ENCODE measurements at regions of chr6 and their contacts with region 1.

Region 1: DNA sequence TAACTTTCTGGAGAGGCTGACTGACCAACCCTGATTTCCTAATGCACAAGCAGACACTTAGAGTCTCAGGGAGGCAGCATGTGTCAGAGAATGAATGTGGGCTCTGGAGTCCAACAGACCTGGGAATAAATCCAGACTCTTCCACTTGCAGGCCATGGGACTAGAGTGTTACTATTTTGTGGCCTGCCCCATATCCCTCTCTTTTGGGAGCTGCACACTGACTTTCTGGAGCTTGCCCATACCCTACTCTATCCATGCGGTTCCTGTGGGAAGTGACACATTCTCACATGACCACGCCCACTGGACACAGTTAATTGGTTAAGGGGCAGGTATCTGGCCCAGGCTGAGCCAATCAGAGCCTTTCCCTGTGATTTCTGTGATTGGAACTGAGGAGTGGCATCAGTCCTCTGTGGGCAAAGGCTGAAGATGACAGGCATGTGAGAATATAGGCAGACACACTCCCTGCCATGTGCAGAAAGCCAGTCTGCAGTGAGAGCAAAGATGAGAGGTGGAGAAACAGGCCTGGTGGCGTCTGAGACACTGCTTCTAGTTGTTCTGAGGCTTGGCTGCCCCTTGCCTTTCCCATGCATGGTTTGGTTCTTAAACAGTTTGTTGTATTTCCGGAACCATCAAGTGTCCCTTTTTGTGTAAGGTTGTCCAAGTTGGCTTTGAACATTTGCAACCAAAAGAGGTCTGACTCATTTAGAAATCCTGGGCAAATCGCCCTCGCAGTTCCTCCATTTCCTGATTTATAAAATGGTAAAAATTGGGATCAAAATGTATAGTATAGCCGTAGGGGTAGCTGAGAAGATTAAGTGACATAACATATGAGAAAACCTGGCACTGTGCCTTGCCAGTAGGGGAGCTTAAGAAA is 125.6 kb downstream of the CDC5L start:
- DNase-seq: no peak
- ATAC-seq: peak; percentile 81

Region 2: DNA sequence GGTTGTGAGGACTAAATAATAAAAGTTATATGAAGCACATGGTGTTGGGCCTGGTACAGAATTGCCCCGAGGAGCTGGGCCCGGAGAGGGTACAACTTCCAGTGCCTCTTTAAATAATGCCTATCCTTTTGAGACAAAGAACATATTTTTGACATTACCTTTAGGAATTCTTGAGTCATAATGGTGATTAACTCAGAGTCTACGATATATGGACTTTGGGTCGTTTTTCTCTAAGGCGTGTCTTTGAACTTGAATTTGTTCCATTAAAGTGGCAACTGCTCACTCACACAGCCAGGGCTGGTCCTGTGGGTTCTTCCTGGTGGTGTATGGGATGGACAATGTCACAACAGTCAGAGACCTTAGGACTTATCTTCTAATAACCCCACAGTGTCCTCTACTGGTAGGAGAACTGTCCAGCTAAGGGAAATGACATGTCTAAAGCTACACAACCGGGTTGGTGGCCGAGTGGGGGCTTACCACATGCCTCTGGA is 19.0 kb before region 1 on chr6:
- intact Hi-C with region 1: no loop called
- DNase-seq: no peak
- ATAC-seq: no peak

Region 3: GRCh38 chr6:44685213-44685612 is 172.1 kb after region 1 on chr6:
- intact Hi-C with region 1: no loop called
- DNase-seq: no peak
- ATAC-seq: no peak

Region 4: GRCh38 chr6:45812922-45813321 is 1299.8 kb after region 1 on chr6:
- intact Hi-C with region 1: loop called (anchors 10 kb)
- DNase-seq: no peak
- ATAC-seq: peak; percentile 50